AG04450 (cell line): ENCODE measurements at regions of chrX and their contacts with region 1.

Region 1: DNA sequence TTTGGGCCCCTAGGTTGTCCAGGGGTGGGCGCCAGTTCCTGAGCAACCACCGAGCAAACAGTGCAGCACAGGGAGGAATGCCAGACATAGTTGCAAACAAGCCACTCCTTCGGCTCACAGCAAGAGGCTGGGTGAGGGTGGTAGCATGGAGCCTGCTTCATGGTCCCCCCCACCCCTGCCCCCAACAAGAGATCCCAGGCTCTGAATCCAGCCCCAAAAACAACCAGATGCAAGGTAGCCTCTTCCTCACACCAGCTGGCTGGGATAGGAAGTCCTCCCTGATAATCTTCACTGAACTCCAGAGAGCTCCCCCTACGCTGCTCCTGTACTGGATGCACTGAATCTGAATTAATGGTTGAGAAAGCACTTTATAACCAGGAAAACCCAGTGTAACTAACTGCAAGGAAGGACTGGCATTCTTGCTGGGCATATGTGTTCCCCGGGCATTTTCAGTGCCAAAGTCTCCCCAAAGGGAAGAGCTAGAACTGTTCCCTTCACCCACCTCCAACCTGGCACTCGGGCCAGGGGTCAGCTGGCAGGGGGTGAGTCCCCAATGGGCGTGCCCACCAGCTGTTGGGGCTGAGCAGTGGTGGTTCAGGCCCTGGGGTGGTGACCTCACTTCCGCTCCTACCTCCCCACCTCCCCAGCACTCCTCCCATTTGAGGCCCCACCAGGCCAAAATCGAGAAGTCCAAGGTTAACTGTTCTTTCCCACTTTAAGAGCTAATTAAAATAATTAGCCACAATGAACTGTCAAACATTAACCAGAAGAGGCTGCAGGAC is 1.5 kb downstream of the ELF4 start:
- DNase-seq: no peak
- H3K4me3 ChIP-seq: peak overlapping the region; percentile 62
- H3K27ac ChIP-seq: no peak overlapping the region
- H3K27me3 ChIP-seq: no peaks in the 10 kb centered on the region
- CTCF ChIP-seq: no peak

Region 2: GRCh38 chrX:130120746-130121504 is 12.1 kb after region 1 on chrX:
- CTCF ChIA-PET with region 1: interaction called, 12 read pairs
- POLR2A ChIA-PET with region 1: interaction called, 7 read pairs
- DNase-seq: no peak
- H3K4me3 ChIP-seq: peak overlapping the region; percentile 45
- H3K27ac ChIP-seq: peak overlapping the region; percentile 21
- H3K27me3 ChIP-seq: no peaks in the 10 kb centered on the region
- CTCF ChIP-seq: peak; percentile 53

Region 3: DNA sequence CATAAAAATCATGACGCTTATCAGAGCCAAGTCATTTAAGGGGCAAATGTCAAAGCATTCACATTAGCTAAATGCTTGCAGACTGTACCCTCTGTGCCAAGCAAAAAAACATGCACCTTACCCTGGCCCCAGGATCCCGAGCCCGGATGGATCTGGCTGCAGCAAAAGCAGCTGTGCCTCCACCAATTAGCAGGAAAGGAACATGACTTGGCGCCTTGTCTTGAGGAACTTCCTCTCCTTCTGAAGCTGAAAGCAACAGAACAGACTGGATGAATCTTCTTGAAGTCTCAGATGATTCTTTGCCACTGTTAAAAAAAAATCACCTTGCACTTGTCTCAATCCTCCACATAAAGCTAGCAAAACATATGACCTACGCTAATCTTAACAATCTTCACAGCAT is 38.8 kb after region 1 on chrX:
- CTCF ChIA-PET with region 1: no interaction called
- POLR2A ChIA-PET with region 1: no interaction called
- DNase-seq: no peak
- H3K4me3 ChIP-seq: no peak overlapping the region
- H3K27ac ChIP-seq: no peak overlapping the region
- H3K27me3 ChIP-seq: no peaks in the 10 kb centered on the region
- CTCF ChIP-seq: no peak